Activated B cell treated with CpG ODN at 0.5 μM for 24 hours (primary cell): ENCODE measurements at regions of chr9 and their contacts with region 1.

Region 1: GRCh38 chr9:19085295-19085694 is 17.4 kb downstream of the HAUS6 start:
- DNase-seq: no peak
- ATAC-seq: peak; percentile 45
- H3K4me3 Mint-ChIP-seq: no peak overlapping the region
- H3K27ac Mint-ChIP-seq: no peak overlapping the region
- H3K4me1 Mint-ChIP-seq: no peaks in the 10 kb centered on the region
- H3K27me3 Mint-ChIP-seq: no peaks in the 10 kb centered on the region
- CTCF ChIP-seq: no peak

Region 2: GRCh38 chr9:19127881-19128500 is 42.7 kb after region 1 on chr9:
- CTCF ChIA-PET with region 1: no interaction called
- POLR2A ChIA-PET with region 1: interaction called, 5 read pairs
- intact Hi-C with region 1: loop called (anchors 5 kb)
- DNase-seq: peak; percentile 18
- ATAC-seq: peak; percentile 12
- H3K4me3 Mint-ChIP-seq: peak overlapping the region; percentile 89
- H3K27ac Mint-ChIP-seq: peak overlapping the region; percentile 79
- H3K4me1 Mint-ChIP-seq: peaks cover 29% of the 10 kb centered on the region
- H3K27me3 Mint-ChIP-seq: no peaks in the 10 kb centered on the region
- CTCF ChIP-seq: no peak